ENCODE measurements at regions of chr10 and their contacts with region 1.

Region 1: GRCh38 chr10:124092860-124093773 is at the start of gene CHST15:
- DNase-seq: peak; percentile 41
- ATAC-seq: peak; percentile 55
- H3K4me3 ChIP-seq: peak within 1 kb of the TSS; percentile 64
- H3K27ac ChIP-seq: peak within 1 kb of the TSS; percentile 76
- H3K4me1 ChIP-seq: peaks cover 32% of the 10 kb centered on the region
- H3K27me3 ChIP-seq: no peaks in the 10 kb centered on the region
- CTCF ChIP-seq: no peak; the same call in 1 of the 2 replicates
- total RNA-seq, gene CHST15: 33.2 TPM

Region 2: DNA sequence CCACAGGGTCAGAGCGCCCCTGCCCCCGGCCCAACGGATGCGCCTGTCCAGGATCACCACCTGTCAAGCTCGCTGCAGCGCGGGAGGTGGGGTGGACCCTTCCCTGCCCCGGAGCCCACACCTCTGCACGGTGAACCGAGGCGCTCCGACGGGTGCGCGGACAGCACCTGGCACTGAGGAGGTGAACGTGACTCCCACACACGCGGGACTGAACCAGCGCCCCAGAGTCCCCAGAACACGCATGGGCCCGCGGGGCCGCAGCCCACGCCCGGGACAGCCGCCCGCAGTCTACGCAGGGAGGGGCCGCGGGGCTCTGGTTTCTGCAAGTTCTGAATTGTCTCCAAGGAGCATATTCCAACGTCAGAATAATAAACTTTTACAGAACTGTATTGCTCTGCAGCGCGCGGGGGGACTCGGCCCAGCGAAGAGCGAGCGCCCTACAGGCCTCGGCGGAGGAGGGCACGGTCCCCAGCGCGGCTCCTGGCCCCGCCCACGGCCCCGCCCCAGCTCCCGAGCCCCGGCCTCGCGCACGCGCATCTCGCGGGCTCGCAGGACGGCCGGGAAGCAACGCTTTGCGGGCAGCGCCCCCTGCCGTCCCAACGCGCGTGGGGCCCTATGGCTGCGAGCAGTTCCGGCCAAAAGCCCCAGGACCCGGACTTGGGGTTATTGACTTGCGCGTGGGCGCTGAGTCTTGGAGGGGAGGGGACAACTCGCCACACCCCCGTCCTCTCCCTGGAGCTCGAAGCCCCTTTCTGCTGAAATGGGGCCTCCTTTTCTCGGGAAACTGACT is 295.9 kb after region 1 on chr10:
- CTCF ChIA-PET with region 1: interaction called, 3 read pairs
- POLR2A ChIA-PET with region 1: no interaction called
- in situ Hi-C with region 1: no loop called
- intact Hi-C with region 1: loop called (anchors 5 kb)
- DNase-seq: peak; percentile 36
- ATAC-seq: peak; percentile 96
- H3K4me3 ChIP-seq: peak overlapping the region; percentile 44 to 55
- H3K27ac ChIP-seq: peak overlapping the region; percentile 60
- H3K4me1 ChIP-seq: peaks cover 8% of the 10 kb centered on the region
- H3K27me3 ChIP-seq: no peaks in the 10 kb centered on the region
- CTCF ChIP-seq: peak; percentile 99